Caco-2 (cell line): ENCODE measurements at regions of chr17 and their contacts with region 1.

Region 1: GRCh38 chr17:47663912-47664625 is 14.3 kb downstream of the KPNB1 start:
- DNase-seq: peak; percentile 84 to 89
- H3K4me3 ChIP-seq: no peak overlapping the region
- H3K4me3 Mint-ChIP-seq: no peak overlapping the region
- H3K27ac Mint-ChIP-seq: peak overlapping the region; percentile 10
- H3K4me1 ChIP-seq: no peaks in the 10 kb centered on the region
- H3K4me1 Mint-ChIP-seq: no peaks in the 10 kb centered on the region
- H3K27me3 ChIP-seq: no peaks in the 10 kb centered on the region
- H3K27me3 Mint-ChIP-seq: no peaks in the 10 kb centered on the region
- CTCF ChIP-seq: peak; percentile 94 to 98

Region 2: GRCh38 chr17:47649153-47649971 is 14.7 kb before region 1 on chr17 and contains the start of gene KPNB1:
- CTCF ChIA-PET with region 1: interaction called, 50 read pairs
- POLR2A ChIA-PET with region 1: interaction called, 30 read pairs
- intact Hi-C with region 1: no loop called
- DNase-seq: peak; percentile 100
- H3K4me3 ChIP-seq: peak within 1 kb of the TSS; percentile 92
- H3K4me3 Mint-ChIP-seq: peak within 1 kb of the TSS; percentile 87
- H3K27ac Mint-ChIP-seq: peak within 1 kb of the TSS; percentile 83
- H3K4me1 ChIP-seq: peaks cover 29% of the 10 kb centered on the region
- H3K4me1 Mint-ChIP-seq: peaks cover 27% of the 10 kb centered on the region
- H3K27me3 ChIP-seq: no peaks in the 10 kb centered on the region
- H3K27me3 Mint-ChIP-seq: no peaks in the 10 kb centered on the region
- CTCF ChIP-seq: peak in 1 of 2 experiments; percentile 2
- total RNA-seq, gene KPNB1: 967 and 1,072 TPM in 2 replicates

Region 3: GRCh38 chr17:47675380-47676198 is 11.5 kb after region 1 on chr17:
- CTCF ChIA-PET with region 1: interaction called, 21 read pairs
- POLR2A ChIA-PET with region 1: interaction called, 3 read pairs
- intact Hi-C with region 1: no loop called
- DNase-seq: no peak
- H3K4me3 ChIP-seq: no peak overlapping the region
- H3K4me3 Mint-ChIP-seq: no peak overlapping the region
- H3K27ac Mint-ChIP-seq: no peak overlapping the region
- H3K4me1 ChIP-seq: no peaks in the 10 kb centered on the region; the same call in 1 of the 2 replicates
- H3K4me1 Mint-ChIP-seq: no peaks in the 10 kb centered on the region
- H3K27me3 ChIP-seq: no peaks in the 10 kb centered on the region
- H3K27me3 Mint-ChIP-seq: no peaks in the 10 kb centered on the region
- CTCF ChIP-seq: no peak

Region 4: GRCh38 chr17:47757386-47757785 is 93.3 kb after region 1 on chr17:
- CTCF ChIA-PET with region 1: no interaction called
- POLR2A ChIA-PET with region 1: interaction called, 16 read pairs
- intact Hi-C with region 1: no loop called
- DNase-seq: no peak
- H3K4me3 ChIP-seq: no peak overlapping the region
- H3K4me3 Mint-ChIP-seq: no peak overlapping the region
- H3K27ac Mint-ChIP-seq: no peak overlapping the region
- H3K4me1 ChIP-seq: no peaks in the 10 kb centered on the region
- H3K4me1 Mint-ChIP-seq: no peaks in the 10 kb centered on the region
- H3K27me3 ChIP-seq: no peaks in the 10 kb centered on the region
- H3K27me3 Mint-ChIP-seq: peaks cover 18% of the 10 kb centered on the region
- CTCF ChIP-seq: no peak

Region 5: GRCh38 chr17:47802341-47803022 is 138.4 kb after region 1 on chr17:
- CTCF ChIA-PET with region 1: interaction called, 4 read pairs
- POLR2A ChIA-PET with region 1: no interaction called
- intact Hi-C with region 1: loop called (anchors 5 kb)
- DNase-seq: peak; percentile 91
- H3K4me3 ChIP-seq: no peak overlapping the region
- H3K4me3 Mint-ChIP-seq: no peak overlapping the region
- H3K27ac Mint-ChIP-seq: no peak overlapping the region
- H3K4me1 ChIP-seq: no peaks in the 10 kb centered on the region
- H3K4me1 Mint-ChIP-seq: peaks cover under 1% of the 10 kb centered on the region
- H3K27me3 ChIP-seq: no peaks in the 10 kb centered on the region
- H3K27me3 Mint-ChIP-seq: peaks cover 3% of the 10 kb centered on the region
- CTCF ChIP-seq: peak; percentile 96 to 98

Region 6: GRCh38 chr17:48084932-48085444 is 420.9 kb after region 1 on chr17:
- CTCF ChIA-PET with region 1: no interaction called
- POLR2A ChIA-PET with region 1: no interaction called
- intact Hi-C with region 1: no loop called
- DNase-seq: no peak
- H3K4me3 ChIP-seq: no peak overlapping the region
- H3K4me3 Mint-ChIP-seq: no peak overlapping the region
- H3K27ac Mint-ChIP-seq: no peak overlapping the region
- H3K4me1 ChIP-seq: peaks cover 7% of the 10 kb centered on the region; the same call in 1 of the 2 replicates
- H3K4me1 Mint-ChIP-seq: no peaks in the 10 kb centered on the region
- H3K27me3 ChIP-seq: no peaks in the 10 kb centered on the region
- H3K27me3 Mint-ChIP-seq: no peaks in the 10 kb centered on the region
- CTCF ChIP-seq: no peak